Endothelial cell of umbilical vein (primary cell): ENCODE measurements at regions of chr15 and their contacts with region 1.

Region 1: DNA sequence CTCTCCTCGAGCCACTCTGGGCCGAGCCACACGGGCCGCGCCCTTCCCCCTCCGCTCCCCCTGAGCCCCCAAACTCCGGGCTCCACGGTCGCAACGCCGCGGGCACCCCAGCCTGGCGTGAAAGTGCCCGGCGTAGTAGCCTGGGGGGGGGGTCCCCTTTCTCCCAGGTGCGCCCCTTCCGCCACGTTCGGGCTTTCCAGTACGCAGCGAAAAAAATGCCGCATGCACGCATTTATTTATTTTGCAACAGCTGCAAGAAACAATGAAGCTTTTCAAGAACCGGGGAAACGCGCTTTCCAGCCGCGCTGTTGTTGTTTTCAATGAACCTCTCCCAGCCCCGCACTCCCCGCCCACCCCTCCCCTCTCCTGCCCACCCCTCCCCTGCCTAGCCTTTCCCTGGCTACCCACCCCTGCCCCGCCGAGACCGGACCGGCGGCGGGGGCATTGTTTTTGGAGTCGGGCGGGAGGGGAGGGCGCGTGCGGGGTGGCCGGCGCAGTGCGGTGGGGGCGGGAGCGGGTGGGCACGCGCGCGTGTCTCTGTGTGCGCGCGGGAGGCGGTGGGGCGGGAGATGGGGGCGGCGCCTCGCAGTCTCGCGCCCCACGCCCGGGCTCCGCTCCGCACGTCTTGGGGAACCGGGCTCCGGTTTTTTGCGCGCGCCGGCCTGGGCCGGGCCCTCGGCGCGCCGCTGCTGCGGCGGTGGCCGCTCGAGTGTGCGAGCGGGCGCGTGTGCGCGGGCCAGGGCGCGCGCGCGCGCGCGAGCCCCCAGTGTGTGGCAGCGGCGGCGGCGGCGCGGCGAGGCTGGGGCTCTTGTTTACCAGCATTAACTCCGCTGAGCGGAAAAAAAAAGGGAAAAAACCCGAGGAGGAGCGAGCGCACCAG is at the start of gene IGF1R:
- DNase-seq: peak; percentile 85
- H3K4me3 ChIP-seq: peak within 1 kb of the TSS; percentile 67 to 96 (median 75)
- H3K27ac ChIP-seq: peak within 1 kb of the TSS; percentile 62
- H3K4me1 ChIP-seq: peaks cover 12% of the 10 kb centered on the region
- H3K27me3 ChIP-seq: peaks cover 9 to 21% of the 10 kb centered on the region in 2 experiments
- CTCF ChIP-seq: peak in 1 of 2 donors; percentile 0
- POLR2A ChIP-seq: no peak
- total RNA-seq, gene IGF1R: 50.9 and 59.1 TPM in 2 replicates

Region 2: DNA sequence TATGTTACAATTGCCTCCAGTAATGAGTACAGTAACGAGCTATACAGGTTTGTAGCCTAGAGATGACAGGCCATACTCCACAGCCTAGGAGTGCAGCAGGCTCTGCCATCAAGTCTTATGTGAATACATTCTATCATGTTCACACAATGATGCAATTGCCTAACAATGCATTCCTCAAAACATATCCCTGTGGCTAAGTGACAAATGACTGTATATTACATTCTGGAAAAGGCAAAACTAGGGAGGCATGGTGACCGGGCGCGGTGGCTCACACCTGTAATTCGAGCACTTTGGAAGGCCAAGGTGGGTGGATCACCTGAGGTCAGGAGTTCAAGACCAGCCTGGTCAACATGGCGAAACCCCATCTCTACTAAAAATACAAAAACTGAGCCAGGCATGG is 192.0 kb before region 1 on chr15:
- CTCF ChIA-PET with region 1: no interaction called
- POLR2A ChIA-PET with region 1: no interaction called
- dilution Hi-C with region 1: no loop called
- intact Hi-C with region 1: no loop called
- DNase-seq: no peak
- H3K4me3 ChIP-seq: no peak overlapping the region
- H3K27ac ChIP-seq: no peak overlapping the region
- H3K4me1 ChIP-seq: no peaks in the 10 kb centered on the region
- H3K27me3 ChIP-seq: no peaks in the 10 kb centered on the region
- CTCF ChIP-seq: no peak
- POLR2A ChIP-seq: no peak

Region 3: DNA sequence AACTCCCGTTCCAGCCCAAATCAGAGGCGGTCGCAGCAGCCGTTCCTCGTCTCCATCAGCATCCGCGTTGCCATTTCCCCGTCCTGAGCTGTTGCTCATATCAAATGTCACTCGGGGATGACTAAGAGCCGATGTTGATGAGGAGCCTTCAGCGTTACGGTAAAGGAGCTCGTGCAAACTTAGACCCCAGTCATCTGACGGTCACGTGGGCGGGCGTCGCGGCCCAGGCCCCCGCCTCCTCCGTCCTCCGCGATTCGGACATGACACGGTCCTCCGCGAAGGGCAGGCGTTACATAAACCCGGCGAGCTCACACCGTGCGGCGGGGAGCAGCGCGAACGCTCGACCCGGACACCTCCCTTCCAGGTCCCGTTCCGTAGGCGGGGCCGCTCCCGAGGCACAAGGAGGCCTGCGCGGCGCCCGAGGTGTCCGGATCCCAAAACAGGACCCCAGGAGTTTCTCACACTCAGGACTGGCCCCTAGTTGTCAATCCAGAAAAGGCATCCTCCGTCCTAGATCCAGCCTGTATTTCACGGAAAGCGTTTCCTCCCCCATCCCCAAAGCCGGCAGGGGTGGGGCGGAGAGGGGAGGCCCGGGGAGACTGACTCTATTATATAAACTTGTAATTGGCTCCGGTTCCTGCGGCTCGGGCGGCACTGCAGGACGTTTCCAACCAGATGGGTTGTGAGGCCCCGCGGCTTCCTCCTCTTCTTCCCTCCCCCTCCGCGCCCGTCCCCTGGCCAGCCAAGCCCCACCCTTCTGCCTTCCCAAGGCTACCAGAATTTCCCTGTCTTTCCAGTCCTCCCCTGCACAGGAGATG is 99.7 kb before region 1 on chr15:
- CTCF ChIA-PET with region 1: interaction called, 4 read pairs
- POLR2A ChIA-PET with region 1: no interaction called
- dilution Hi-C with region 1: no loop called
- intact Hi-C with region 1: loop called (anchors 1 kb)
- DNase-seq: peak; percentile 53
- H3K4me3 ChIP-seq: peak overlapping the region; percentile 7 to 51 (median 34)
- H3K27ac ChIP-seq: no peak overlapping the region
- H3K4me1 ChIP-seq: peaks cover 12% of the 10 kb centered on the region
- H3K27me3 ChIP-seq: peaks cover 3 to 13% of the 10 kb centered on the region in 2 experiments
- CTCF ChIP-seq: no peak
- POLR2A ChIP-seq: no peak

Region 4: DNA sequence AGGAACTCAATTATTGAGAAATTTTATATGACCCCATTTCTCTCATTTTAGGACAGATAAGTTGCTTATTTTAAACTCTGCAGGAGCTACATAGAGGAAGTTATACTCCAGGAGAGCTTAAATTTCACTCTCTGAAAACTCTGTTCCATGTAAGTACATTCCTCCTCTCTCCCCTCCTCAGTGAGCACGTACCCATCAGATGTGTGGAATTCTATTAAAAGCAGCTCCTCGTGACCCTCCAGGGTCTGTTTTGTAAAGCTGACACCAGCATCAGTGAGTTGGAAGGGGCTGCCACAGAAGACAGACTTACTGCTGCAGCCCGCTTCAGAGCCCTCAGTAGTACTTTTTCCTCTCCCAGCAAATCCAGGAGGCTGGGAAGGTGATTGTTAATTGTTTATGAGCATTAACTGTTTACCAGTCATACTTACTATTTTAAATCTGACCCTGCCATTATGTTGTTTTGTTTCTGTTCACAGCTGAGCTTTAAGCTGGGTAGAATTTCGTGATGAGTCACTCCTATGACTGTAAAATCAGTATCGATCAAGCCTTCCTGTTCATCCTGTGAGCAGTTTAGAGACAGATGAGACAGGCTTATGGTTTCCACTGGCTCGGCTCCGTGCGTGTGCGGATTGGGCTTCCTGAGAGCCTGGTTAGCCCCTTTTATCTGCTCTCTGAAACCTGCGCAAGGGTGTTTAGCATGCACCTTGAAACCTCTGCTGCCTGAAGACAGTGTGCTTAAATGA is 20.7 kb after region 1 on chr15:
- CTCF ChIA-PET with region 1: interaction called, 5 read pairs
- POLR2A ChIA-PET with region 1: no interaction called
- dilution Hi-C with region 1: no loop called
- intact Hi-C with region 1: loop called (anchors 1 kb)
- DNase-seq: peak; percentile 75
- H3K4me3 ChIP-seq: peak overlapping the region in 1 of 3 experiments; percentile 5
- H3K27ac ChIP-seq: peak overlapping the region; percentile 64
- H3K4me1 ChIP-seq: peaks cover 49% of the 10 kb centered on the region
- H3K27me3 ChIP-seq: no peaks in the 10 kb centered on the region
- CTCF ChIP-seq: no peak
- POLR2A ChIP-seq: no peak

Region 5: DNA sequence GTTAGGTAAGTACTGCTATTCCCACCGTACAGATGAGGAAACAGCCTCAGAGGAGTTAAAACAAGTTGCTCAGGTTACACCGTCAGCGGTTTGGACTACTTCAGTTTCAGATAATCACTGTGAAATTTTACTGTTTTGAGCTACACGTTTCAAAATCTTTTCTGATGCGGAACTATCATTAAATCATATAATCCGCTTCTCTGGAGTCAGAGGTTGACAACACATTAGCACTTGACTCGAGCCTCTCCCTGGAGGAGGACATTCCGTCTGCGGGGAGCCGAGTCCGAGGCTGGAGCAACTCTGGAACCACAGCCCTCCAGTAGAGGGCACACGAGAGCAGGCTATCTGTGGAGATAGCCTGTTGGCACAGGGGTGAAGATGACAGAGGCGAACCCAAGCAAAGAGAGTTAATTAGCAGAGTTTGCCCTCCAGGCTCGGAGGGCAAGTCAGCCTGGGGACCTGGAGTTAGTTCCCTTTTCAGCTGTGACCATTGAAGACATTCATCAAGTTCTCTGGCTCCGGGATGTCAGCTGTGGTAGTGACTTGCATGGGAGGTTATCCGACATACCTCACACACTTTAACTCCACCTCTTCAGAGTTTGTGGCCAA is 131.6 kb after region 1 on chr15:
- CTCF ChIA-PET with region 1: interaction called, 4 read pairs
- POLR2A ChIA-PET with region 1: no interaction called
- dilution Hi-C with region 1: no loop called
- intact Hi-C with region 1: loop called (anchors 1 kb)
- DNase-seq: peak; percentile 77
- H3K4me3 ChIP-seq: no peak overlapping the region
- H3K27ac ChIP-seq: no peak overlapping the region
- H3K4me1 ChIP-seq: peaks cover 5% of the 10 kb centered on the region
- H3K27me3 ChIP-seq: no peaks in the 10 kb centered on the region
- CTCF ChIP-seq: peak; percentile 93 to 95
- POLR2A ChIP-seq: no peak

Region 6: DNA sequence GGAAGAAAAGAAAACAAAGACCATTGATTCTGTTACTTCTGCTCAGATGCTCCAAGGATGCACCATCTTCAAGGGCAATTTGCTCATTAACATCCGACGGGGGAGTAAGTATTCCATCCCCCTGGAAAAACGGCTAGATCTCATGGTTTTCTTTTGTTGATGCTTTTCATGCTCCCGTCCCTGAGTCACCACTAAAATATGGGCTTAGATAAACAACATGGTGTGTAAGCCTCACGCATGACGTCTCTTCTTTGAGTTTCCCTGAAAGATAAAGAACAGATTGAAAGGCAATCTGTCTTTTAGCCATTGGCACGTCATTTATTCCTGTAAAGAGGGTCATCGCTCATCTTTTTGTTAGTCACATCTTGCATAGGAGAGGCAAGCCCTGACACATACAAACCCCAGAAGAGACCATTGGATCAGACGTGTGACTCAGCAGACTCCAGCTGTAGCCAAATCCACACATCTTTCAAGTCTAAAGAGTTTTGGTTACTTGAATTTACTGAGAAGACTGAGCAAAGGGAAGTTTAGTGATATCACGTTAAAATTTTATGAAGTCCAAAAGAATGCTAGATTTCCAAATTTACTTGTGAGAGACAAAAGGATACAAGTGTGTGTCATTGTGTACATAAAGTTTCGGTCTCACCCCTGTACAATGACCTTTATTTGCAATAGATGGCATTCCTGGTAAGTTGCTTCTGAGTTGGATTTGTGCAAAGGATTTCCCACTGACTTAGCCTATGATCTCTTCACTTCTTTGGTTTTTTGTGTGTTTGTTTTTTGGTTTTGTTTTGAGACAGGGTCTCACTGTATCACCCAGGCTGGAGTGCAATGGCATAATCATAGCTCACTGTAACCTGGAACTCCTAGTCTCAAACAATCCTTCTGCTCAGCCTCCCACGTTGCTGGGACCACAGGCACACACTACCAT is 249.1 kb after region 1 on chr15:
- CTCF ChIA-PET with region 1: no interaction called
- POLR2A ChIA-PET with region 1: no interaction called
- dilution Hi-C with region 1: loop called (anchors 25 kb)
- intact Hi-C with region 1: loop called (anchors 2 kb)
- DNase-seq: peak; percentile 95
- H3K4me3 ChIP-seq: peak overlapping the region in 1 of 3 experiments; percentile 1
- H3K27ac ChIP-seq: peak overlapping the region; percentile 99
- H3K4me1 ChIP-seq: peaks cover 32% of the 10 kb centered on the region
- H3K27me3 ChIP-seq: no peaks in the 10 kb centered on the region
- CTCF ChIP-seq: no peak
- POLR2A ChIP-seq: no peak